ENCODE measurements at regions of chr2 and their contacts with region 1.

Region 1: DNA sequence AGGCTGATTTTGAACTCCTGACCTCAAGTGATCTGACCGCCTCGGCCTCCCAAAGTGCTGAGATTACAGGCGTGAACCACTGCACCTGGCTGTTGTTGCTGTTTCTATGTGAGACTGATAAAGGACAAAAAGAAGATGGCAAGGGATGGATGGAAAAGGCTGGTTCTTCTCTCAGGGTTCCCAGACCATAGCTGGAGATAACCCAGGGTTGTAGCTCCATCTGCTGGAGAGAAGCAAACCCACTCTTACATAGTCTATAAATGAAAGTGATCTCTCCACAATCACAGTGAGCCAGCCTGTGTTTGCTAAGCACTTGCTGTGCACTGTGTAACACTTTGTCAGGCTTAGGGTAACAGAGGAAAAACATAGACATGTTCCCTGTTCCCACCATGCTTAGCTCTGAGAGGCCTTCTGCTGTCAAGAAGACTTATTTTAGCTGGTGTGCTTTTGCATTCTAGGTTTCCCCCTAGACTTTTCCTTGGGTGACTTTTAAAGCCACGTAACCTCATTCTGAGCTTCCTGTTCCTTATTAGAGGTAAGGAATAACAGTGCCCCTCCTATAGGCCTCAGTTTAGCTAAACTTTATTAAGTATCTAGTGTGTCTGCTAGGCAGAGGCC is 49.7 kb downstream of the LIMS1 start:
- DNase-seq: peak; percentile 58 to 84 (median 68)
- ATAC-seq: peak; percentile 85
- H3K4me3 ChIP-seq: no peak overlapping the region
- H3K27ac ChIP-seq: no peak overlapping the region
- H3K4me1 ChIP-seq: peaks cover 16 to 20% of the 10 kb centered on the region in 2 experiments; a peak in 4 of 5 replicates
- H3K27me3 ChIP-seq: no peaks in the 10 kb centered on the region
- CTCF ChIP-seq: peak; percentile 78 to 92 (median 81)
- EP300 ChIP-seq: no peak
- POLR2A ChIP-seq: no peak
- RAD21 ChIP-seq: peak; percentile 91 to 93

Region 2: GRCh38 chr2:107936433-107937359 is 647.3 kb before region 1 on chr2:
- CTCF ChIA-PET with region 1: interaction called, 4 read pairs
- POLR2A ChIA-PET with region 1: no interaction called
- in situ Hi-C with region 1: loop called (anchors 25 kb)
- intact Hi-C with region 1: loop called (anchors 5 kb)
- DNase-seq: peak; percentile 28 to 37 (median 30)
- ATAC-seq: no peak
- H3K4me3 ChIP-seq: no peak overlapping the region
- H3K27ac ChIP-seq: no peak overlapping the region
- H3K4me1 ChIP-seq: no peaks in the 10 kb centered on the region
- H3K27me3 ChIP-seq: no peaks in the 10 kb centered on the region; a peak in 1 of 5 replicates
- CTCF ChIP-seq: peak; percentile 31 to 65 (median 46); a peak in 3 of 6 replicates
- EP300 ChIP-seq: no peak
- POLR2A ChIP-seq: no peak
- RAD21 ChIP-seq: peak; percentile 27 to 58; a peak in 3 of 4 replicates

Region 3: DNA sequence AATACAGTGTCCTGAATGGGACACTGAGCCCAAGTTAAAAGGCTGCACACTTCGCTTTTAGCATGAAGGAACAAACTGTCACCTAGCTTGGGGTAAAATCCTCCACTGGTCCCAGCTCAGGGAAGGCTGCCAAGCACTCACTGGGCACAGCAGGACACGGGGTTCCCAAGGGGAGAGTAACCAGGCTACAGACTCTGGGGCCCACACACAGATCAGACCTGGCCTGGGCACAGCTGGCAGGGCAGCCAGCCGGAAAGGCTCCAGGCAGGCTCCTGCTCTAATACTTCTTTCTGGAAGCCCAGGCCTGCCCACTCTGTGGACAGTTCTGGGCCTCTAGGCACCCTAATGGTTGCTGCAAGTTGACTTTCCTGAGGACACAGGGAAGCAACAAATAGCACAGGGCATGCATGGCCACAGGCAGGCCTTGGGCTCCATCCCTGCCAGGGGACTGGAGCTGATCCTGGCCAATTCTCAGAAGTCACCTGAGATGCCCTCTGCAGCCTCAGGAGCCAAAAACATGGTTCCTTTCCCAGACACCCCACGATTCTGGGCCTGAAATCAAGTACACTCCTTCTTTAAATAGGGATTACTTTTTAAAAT is 363.0 kb before region 1 on chr2:
- CTCF ChIA-PET with region 1: interaction called, 9 read pairs
- POLR2A ChIA-PET with region 1: no interaction called
- in situ Hi-C with region 1: loop called (anchors 10 kb)
- intact Hi-C with region 1: loop called (anchors 1 kb)
- DNase-seq: no peak
- ATAC-seq: no peak
- H3K4me3 ChIP-seq: no peak overlapping the region
- H3K27ac ChIP-seq: no peak overlapping the region
- H3K4me1 ChIP-seq: no peaks in the 10 kb centered on the region
- H3K27me3 ChIP-seq: no peaks in the 10 kb centered on the region
- CTCF ChIP-seq: no peak
- EP300 ChIP-seq: no peak
- POLR2A ChIP-seq: no peak
- RAD21 ChIP-seq: no peak

Region 4: DNA sequence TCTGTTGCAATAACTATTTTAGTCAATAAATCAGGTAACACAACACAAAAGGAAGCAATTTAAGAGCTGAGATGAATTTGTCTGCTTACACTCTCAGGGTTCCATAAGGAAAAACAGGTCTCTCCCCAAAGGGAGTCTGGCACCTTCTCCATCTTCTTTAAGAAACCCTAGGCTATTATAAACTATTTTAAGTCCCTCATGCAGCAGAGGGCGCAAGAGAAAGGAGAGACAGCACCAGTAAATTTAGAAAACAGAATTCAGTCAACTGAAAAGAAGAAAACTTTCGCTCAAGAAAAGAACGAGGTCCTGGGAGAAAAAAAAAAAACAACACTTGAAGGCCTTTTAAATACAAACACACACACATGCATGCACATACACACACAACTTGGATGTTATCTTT is 187.2 kb before region 1 on chr2:
- CTCF ChIA-PET with region 1: no interaction called
- POLR2A ChIA-PET with region 1: no interaction called
- in situ Hi-C with region 1: no loop called
- intact Hi-C with region 1: loop called (anchors 1 kb)
- DNase-seq: peak in 1 of 4 experiments; percentile 58
- ATAC-seq: peak; percentile 61
- H3K4me3 ChIP-seq: no peak overlapping the region
- H3K27ac ChIP-seq: no peak overlapping the region
- H3K4me1 ChIP-seq: peaks cover 0 to 9% of the 10 kb centered on the region in 2 experiments; a peak in 3 of 5 replicates
- H3K27me3 ChIP-seq: no peaks in the 10 kb centered on the region
- CTCF ChIP-seq: peak; percentile 25 to 54 (median 26); a peak in 3 of 6 replicates
- EP300 ChIP-seq: no peak
- POLR2A ChIP-seq: no peak
- RAD21 ChIP-seq: peak in 1 of 2 experiments; percentile 46; a peak in 2 of 4 replicates

Region 5: GRCh38 chr2:108423502-108424252 is 160.3 kb before region 1 on chr2:
- CTCF ChIA-PET with region 1: no interaction called
- POLR2A ChIA-PET with region 1: no interaction called
- in situ Hi-C with region 1: no loop called
- intact Hi-C with region 1: no loop called
- DNase-seq: no peak
- ATAC-seq: peak; percentile 76
- H3K4me3 ChIP-seq: no peak overlapping the region
- H3K27ac ChIP-seq: no peak overlapping the region
- H3K4me1 ChIP-seq: peaks cover 0 to 2% of the 10 kb centered on the region in 2 experiments; a peak in 1 of 5 replicates
- H3K27me3 ChIP-seq: no peaks in the 10 kb centered on the region
- CTCF ChIP-seq: no peak
- EP300 ChIP-seq: no peak
- POLR2A ChIP-seq: no peak
- RAD21 ChIP-seq: no peak

Region 6: DNA sequence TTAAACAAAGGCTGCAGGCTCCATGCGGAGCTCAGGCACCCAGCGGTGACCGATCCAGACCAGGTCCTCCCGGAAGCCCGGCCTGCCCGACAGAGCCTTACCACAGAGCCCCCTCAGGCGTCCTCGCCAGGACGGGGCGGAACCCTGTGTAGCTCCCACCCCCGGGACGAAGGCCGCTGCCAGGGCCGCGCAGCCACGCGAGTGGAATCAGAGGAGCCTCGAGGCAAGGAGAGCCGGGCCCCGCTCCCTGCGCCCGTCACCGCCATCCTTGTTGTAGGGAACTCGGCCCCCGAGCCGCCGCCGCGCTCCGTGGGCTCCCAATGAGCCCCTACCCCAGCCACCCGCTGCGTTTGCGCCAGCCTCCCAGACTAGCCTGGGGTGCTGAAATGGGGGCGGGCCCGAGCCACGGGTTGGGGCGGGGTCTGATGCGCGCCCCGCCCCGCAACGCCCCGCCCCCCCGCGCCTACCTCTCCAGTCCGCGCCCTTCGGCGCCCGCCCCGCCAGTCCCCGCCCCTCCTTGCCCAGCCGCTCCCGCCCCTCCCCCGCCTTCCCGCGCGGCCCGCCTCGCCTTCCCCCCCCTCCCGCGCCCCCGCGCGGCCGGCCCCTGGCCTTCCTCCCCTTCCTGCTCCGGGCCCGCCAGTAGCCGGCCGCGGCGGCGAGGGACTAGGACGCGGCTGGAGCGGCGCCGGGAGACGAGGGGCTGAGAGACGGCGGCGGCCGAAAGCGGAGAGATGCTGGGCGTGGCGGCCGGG is 50.0 kb before region 1 on chr2 and contains the start of gene LIMS1:
- CTCF ChIA-PET with region 1: no interaction called
- POLR2A ChIA-PET with region 1: interaction called, 3 read pairs
- in situ Hi-C with region 1: no loop called
- intact Hi-C with region 1: loop called (anchors 5 kb)
- DNase-seq: peak; percentile 88 to 97 (median 95)
- ATAC-seq: peak; percentile 90
- H3K4me3 ChIP-seq: peak within 1 kb of the TSS; percentile 86
- H3K27ac ChIP-seq: peak within 1 kb of the TSS; percentile 93
- H3K4me1 ChIP-seq: peaks cover 23 to 25% of the 10 kb centered on the region in 2 experiments
- H3K27me3 ChIP-seq: no peaks in the 10 kb centered on the region
- CTCF ChIP-seq: peak in 1 of 3 experiments; percentile 12; a peak in 1 of 6 replicates
- EP300 ChIP-seq: no peak
- POLR2A ChIP-seq: peak; percentile 96
- RAD21 ChIP-seq: no peak
- polyA plus RNA-seq, gene LIMS1: 52.8 to 81.0 TPM

Region 7: GRCh38 chr2:108719149-108720044 is 135.4 kb after region 1 on chr2 and contains the start of gene RANBP2:
- CTCF ChIA-PET with region 1: no interaction called
- POLR2A ChIA-PET with region 1: no interaction called
- in situ Hi-C with region 1: no loop called
- intact Hi-C with region 1: no loop called
- DNase-seq: peak; percentile 79 to 98 (median 82)
- ATAC-seq: peak; percentile 92
- H3K4me3 ChIP-seq: peak within 1 kb of the TSS; percentile 82
- H3K27ac ChIP-seq: peak within 1 kb of the TSS; percentile 95
- H3K4me1 ChIP-seq: peaks cover 7 to 12% of the 10 kb centered on the region in 2 experiments; a peak in 3 of 5 replicates
- H3K27me3 ChIP-seq: no peaks in the 10 kb centered on the region
- CTCF ChIP-seq: no peak
- EP300 ChIP-seq: peak; percentile 57
- POLR2A ChIP-seq: peak; percentile 92
- RAD21 ChIP-seq: no peak
- polyA plus RNA-seq, gene RANBP2: 11.7 to 11.9 TPM